Natural killer cell (primary cell): ENCODE measurements at regions of chr7 and their contacts with region 1.

Region 1: GRCh38 chr7:89622838-89623672 is 531.2 kb upstream of the STEAP1 start:
- DNase-seq: peak in 1 of 2 donors; percentile 60
- ATAC-seq: peak in 2 of 3 donors; percentile 64 to 66
- H3K4me3 ChIP-seq: no peak overlapping the region
- H3K4me3 Mint-ChIP-seq: no peak overlapping the region
- H3K27ac ChIP-seq: no peak overlapping the region
- H3K27ac Mint-ChIP-seq: no peak overlapping the region
- H3K4me1 ChIP-seq: peaks cover 15% of the 10 kb centered on the region
- H3K4me1 Mint-ChIP-seq: peaks cover 14 to 15% of the 10 kb centered on the region in 2 donors
- H3K27me3 ChIP-seq: no peaks in the 10 kb centered on the region
- H3K27me3 Mint-ChIP-seq: no peaks in the 10 kb centered on the region
- CTCF ChIP-seq: peak; percentile 49

Region 2: GRCh38 chr7:88243345-88243909 is 1379.6 kb before region 1 on chr7:
- intact Hi-C with region 1: loop called (anchors 10 kb)
- DNase-seq: peak in 1 of 2 donors; percentile 31
- ATAC-seq: peak; percentile 36 to 58 (median 41)
- H3K4me3 ChIP-seq: no peak overlapping the region
- H3K4me3 Mint-ChIP-seq: no peak overlapping the region
- H3K27ac ChIP-seq: no peak overlapping the region
- H3K27ac Mint-ChIP-seq: no peak overlapping the region
- H3K4me1 ChIP-seq: no peaks in the 10 kb centered on the region
- H3K4me1 Mint-ChIP-seq: no peaks in the 10 kb centered on the region
- H3K27me3 ChIP-seq: no peaks in the 10 kb centered on the region
- H3K27me3 Mint-ChIP-seq: peaks cover 18 to 38% of the 10 kb centered on the region in 2 donors
- CTCF ChIP-seq: no peak

Region 3: GRCh38 chr7:89676909-89677308 is 53.9 kb after region 1 on chr7:
- intact Hi-C with region 1: no loop called
- DNase-seq: no peak
- ATAC-seq: no peak
- H3K4me3 ChIP-seq: no peak overlapping the region
- H3K4me3 Mint-ChIP-seq: no peak overlapping the region
- H3K27ac ChIP-seq: no peak overlapping the region
- H3K27ac Mint-ChIP-seq: no peak overlapping the region
- H3K4me1 ChIP-seq: no peaks in the 10 kb centered on the region
- H3K4me1 Mint-ChIP-seq: no peaks in the 10 kb centered on the region
- H3K27me3 ChIP-seq: no peaks in the 10 kb centered on the region
- H3K27me3 Mint-ChIP-seq: no peaks in the 10 kb centered on the region
- CTCF ChIP-seq: no peak

Region 4: GRCh38 chr7:90211391-90212148 is 588.5 kb after region 1 on chr7 and contains the start of gene STEAP2:
- intact Hi-C with region 1: no loop called
- DNase-seq: peak in 1 of 2 donors; percentile 3
- ATAC-seq: peak in 1 of 3 donors; percentile 39
- H3K4me3 ChIP-seq: no peak within 1 kb of the TSS
- H3K4me3 Mint-ChIP-seq: no peak within 1 kb of the TSS
- H3K27ac ChIP-seq: no peak within 1 kb of the TSS
- H3K27ac Mint-ChIP-seq: no peak within 1 kb of the TSS
- H3K4me1 ChIP-seq: no peaks in the 10 kb centered on the region
- H3K4me1 Mint-ChIP-seq: no peaks in the 10 kb centered on the region
- H3K27me3 ChIP-seq: peaks cover 15% of the 10 kb centered on the region
- H3K27me3 Mint-ChIP-seq: peaks cover 8 to 21% of the 10 kb centered on the region in 2 donors
- CTCF ChIP-seq: no peak
- total RNA-seq, gene STEAP2: 0.05 to 0.16 TPM in 2 of 3 donors, not detected in the other